Mammary epithelial cell (primary cell): ENCODE measurements at regions of chr11 and their contacts with region 1.

Region 1: DNA sequence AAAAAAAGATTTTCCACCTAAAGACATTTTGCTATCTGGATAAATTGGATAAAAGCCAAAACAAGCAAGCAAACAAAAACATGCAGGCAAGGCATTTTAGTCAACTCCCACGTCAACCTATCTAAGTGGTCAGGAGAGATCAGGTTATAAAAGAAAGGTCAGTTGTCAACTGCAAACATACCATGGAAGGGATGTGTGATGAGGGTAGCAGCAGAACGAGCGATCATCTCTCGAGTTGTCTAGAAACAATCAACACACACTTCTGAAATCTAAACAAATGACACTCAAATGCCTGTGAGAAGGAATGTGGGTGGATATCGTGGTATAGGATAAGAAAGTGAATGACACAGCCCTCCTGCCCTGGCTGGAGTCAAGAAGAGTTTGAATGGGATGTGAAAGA is 10.9 kb downstream of the MTCH2 start:
- DNase-seq: no peak
- H3K4me3 ChIP-seq: no peak overlapping the region
- H3K27ac ChIP-seq: no peak overlapping the region
- H3K4me1 ChIP-seq: no peaks in the 10 kb centered on the region
- H3K27me3 ChIP-seq: no peaks in the 10 kb centered on the region
- CTCF ChIP-seq: no peak

Region 2: DNA sequence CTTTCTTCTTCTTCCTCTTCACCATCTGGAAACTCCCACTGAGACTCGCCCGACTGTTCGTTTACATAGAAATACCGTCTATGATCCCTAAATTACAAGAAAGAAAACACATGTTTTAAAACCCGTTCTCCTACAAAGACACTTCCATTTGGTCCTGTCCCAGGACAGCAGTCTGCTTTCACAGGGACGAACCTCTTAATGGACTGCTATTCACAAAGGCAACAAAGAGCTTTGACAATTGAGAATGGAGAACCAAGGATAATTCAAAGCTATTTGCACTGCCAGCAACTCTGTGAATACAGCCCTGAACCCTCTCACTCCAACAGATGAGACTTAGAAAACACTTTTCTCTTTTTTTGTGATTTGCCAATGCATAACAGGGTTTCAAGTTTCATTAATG is 100.0 kb after region 1 on chr11:
- CTCF ChIA-PET with region 1: no interaction called
- dilution Hi-C with region 1: no loop called
- in situ Hi-C with region 1: loop called in 1 of 2 experiments (anchors 10 kb)
- intact Hi-C with region 1: no loop called
- DNase-seq: no peak
- H3K4me3 ChIP-seq: no peak overlapping the region
- H3K27ac ChIP-seq: no peak overlapping the region
- H3K4me1 ChIP-seq: no peaks in the 10 kb centered on the region
- H3K27me3 ChIP-seq: no peaks in the 10 kb centered on the region
- CTCF ChIP-seq: no peak

Region 3: DNA sequence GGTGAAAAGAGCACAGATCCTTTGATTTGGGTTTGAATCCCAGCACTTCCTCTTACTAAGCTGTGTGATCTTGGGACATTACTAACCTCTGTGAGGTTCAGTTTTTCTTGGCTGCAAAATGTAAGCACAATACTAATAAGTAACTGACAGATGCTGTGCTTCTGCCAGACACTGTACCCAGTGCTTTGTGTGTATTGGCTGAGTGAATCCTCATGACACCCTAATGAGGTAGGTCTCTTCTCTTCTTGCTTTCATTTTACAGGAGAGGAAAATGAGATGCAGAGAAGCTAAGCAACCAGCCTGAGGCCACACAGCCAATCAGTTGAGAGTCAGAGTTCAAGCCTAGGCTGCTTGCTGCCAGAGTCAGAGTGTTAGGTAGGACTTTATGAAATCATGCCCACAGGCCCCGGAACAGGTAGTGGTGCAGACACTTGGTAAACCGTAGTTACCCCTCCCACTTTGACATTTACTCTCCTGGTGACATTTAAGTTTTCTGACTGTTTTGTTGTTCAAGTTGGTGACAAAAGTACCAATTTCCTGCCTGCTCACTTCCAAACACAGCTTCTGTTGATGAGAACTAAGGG is 370.1 kb after region 1 on chr11:
- CTCF ChIA-PET with region 1: no interaction called
- dilution Hi-C with region 1: no loop called
- in situ Hi-C with region 1: no loop called
- intact Hi-C with region 1: no loop called
- DNase-seq: no peak
- H3K4me3 ChIP-seq: no peak overlapping the region
- H3K27ac ChIP-seq: no peak overlapping the region
- H3K4me1 ChIP-seq: no peaks in the 10 kb centered on the region
- H3K27me3 ChIP-seq: no peaks in the 10 kb centered on the region
- CTCF ChIP-seq: no peak